Motor neuron (in vitro differentiated cells): ENCODE measurements at regions of chr3 and their contacts with region 1.

Region 1: GRCh38 chr3:158790901-158791589 is 10.8 kb upstream of the MFSD1 start:
- ATAC-seq: peak in 4 of 8 experiments; percentile 56 to 74 (median 64)
- H3K4me3 ChIP-seq: no peak overlapping the region
- H3K27ac ChIP-seq: no peak overlapping the region
- H3K4me1 ChIP-seq: no peaks in the 10 kb centered on the region

Region 2: GRCh38 chr3:158659454-158660237 is 131.4 kb before region 1 on chr3:
- in situ Hi-C with region 1: loop called in 3 of 9 experiments (anchors 5 to 25 kb)
- ATAC-seq: peak in 7 of 8 experiments; percentile 34 to 89 (median 77)
- H3K4me3 ChIP-seq: no peak overlapping the region
- H3K27ac ChIP-seq: no peak overlapping the region
- H3K4me1 ChIP-seq: no peaks in the 10 kb centered on the region

Region 3: DNA sequence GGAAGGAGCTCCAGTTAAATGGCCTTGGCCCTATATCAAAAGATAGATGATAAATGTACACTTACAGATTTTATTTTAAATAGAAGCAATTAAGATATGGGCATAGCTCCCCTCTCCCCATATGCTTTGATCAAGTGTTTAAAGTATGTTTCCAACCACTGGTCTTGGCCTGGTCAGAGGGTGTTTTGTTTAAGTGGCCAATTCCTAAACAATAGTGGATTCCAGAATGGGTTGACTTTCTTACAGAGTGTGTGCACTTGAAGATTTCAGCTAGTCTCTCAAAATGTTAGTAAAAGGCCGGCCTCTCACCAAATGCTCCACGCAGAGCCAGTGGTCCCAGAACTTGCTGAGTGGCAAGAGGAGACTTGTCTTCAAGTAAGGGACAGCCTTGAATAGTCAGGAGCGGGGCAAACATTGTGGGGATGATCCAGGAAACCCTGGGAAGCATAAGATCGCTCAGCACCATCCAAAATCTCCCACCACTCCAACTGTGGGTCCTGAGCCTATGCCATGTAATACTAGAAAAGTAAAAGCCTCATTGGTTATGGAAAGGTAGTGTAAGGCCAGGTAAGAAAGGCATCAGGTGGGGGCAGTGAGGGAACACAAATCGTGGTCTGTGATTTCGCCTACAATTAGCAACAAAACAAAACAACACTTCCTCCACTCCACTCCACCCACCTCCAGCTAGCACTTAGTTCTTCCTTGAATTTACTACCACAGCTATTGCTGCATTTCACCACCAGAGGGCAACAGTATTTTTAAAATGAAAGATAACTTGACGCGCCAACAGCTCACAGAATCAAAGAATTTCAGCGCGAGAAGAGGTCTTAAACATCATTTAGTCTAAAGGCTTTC is 63.6 kb before region 1 on chr3:
- in situ Hi-C with region 1: loop called in 2 of 9 experiments (anchors 5 to 10 kb)
- ATAC-seq: peak in 7 of 8 experiments; percentile 5 to 37 (median 27)
- H3K4me3 ChIP-seq: no peak overlapping the region
- H3K27ac ChIP-seq: no peak overlapping the region
- H3K4me1 ChIP-seq: peaks cover 6 to 7% of the 10 kb centered on the region in 2 donors

Region 4: GRCh38 chr3:159322322-159322939 is 531.4 kb after region 1 on chr3:
- in situ Hi-C with region 1: no loop called
- ATAC-seq: peak in 4 of 8 experiments; percentile 20 to 81 (median 58)
- H3K4me3 ChIP-seq: no peak overlapping the region
- H3K27ac ChIP-seq: no peak overlapping the region
- H3K4me1 ChIP-seq: no peaks in the 10 kb centered on the region

Region 5: GRCh38 chr3:159732172-159733111 is 941.4 kb after region 1 on chr3:
- in situ Hi-C with region 1: no loop called
- ATAC-seq: peak in 4 of 8 experiments; percentile 33 to 75 (median 50)
- H3K4me3 ChIP-seq: no peak overlapping the region
- H3K27ac ChIP-seq: no peak overlapping the region
- H3K4me1 ChIP-seq: no peaks in the 10 kb centered on the region

Region 6: GRCh38 chr3:159902546-159903314 is 1111.7 kb after region 1 on chr3:
- in situ Hi-C with region 1: no loop called
- ATAC-seq: peak in 1 of 8 experiments; percentile 14
- H3K4me3 ChIP-seq: no peak overlapping the region
- H3K27ac ChIP-seq: no peak overlapping the region
- H3K4me1 ChIP-seq: no peaks in the 10 kb centered on the region